ENCODE measurements at regions of chrX and their contacts with region 1.

Region 1: DNA sequence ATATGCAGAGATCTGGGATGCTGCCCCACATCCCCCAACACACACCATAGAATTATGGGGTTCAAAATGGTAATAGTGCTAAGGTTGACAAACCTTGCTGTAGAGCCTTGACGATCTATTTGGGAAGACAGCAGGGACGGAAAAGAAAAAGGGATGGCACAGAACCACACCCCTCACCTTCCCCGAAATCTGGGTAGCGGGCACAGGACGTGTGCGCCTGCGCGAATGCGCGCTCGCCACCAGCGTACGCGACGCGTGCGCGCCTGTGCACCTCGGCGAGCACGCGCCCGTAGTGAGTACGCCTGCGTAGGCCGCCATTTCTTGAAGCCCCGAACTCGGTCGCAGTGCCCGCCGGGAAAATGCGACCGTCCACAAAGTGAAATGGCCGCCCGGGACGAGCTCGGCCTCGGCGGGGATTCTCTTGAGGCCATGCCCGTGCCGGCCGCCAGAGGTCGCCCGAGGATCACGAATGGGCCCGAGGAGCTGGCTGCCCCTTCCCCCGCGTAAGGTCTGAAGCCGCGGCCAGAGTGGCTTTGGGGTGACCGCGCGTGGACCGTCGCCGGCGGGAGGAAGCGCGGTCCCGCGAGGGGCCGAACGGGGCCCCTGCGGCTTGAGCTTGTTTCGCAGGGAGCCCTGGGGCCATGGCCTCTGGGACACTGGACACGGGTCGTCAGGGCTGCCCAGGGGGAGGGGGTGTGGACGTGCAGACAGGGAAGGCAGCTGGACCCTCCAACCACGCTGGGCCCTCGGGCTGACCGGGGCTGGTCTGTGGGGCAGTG is 43.6 kb downstream of the ZNF185 start:
- DNase-seq: peak; percentile 86 to 97
- H3K4me3 ChIP-seq: peak overlapping the region; percentile 65
- H3K27ac ChIP-seq: no peak overlapping the region
- H3K4me1 ChIP-seq: peaks cover 5% of the 10 kb centered on the region; the same call in 1 of the 2 replicates
- H3K27me3 ChIP-seq: no peaks in the 10 kb centered on the region
- CTCF ChIP-seq: peak; percentile 92

Region 2: DNA sequence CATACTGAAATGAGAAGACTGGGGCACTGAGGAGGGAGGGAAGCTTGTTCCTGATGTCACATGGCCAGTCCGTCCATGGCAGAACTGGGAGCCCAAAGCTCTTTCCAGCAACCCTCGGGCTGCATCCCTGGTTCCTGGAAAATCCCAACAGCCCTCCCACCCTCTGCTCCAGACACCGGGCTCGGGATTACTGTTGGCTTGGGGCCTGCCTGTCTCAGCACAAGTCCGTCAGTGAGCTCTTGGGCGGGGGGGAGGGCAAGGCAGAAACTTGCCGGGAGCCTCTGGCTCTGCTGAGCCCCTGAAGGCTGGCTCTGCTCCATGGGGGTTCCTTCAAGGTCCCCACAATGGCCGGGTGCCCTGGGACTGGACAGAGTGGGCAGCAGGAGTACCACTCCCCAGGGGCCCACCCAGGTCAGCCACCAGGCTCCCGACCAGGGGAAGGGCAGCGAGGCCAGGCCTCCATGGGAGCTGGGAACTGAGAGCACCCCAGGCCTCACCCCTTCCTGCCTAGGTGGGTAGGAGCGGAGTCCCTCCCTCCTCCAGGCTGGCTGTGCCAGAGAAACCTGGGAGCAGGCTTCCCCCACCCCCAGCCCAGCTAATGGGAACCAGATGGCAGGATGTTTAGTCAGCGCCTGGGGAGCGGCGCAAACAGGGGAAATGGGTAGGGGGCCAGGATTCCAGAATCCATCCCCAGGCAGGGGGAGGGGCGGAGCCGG is 535.3 kb after region 1 on chrX:
- CTCF ChIA-PET with region 1: interaction called, 11 read pairs
- POLR2A ChIA-PET with region 1: no interaction called
- intact Hi-C with region 1: no loop called
- DNase-seq: no peak
- H3K4me3 ChIP-seq: no peak overlapping the region
- H3K27ac ChIP-seq: no peak overlapping the region
- H3K4me1 ChIP-seq: no peaks in the 10 kb centered on the region
- H3K27me3 ChIP-seq: peaks cover 22% of the 10 kb centered on the region; the same call in 1 of the 2 replicates
- CTCF ChIP-seq: no peak

Measured in PC-9 (cell line).